AG04449 (cell line): ENCODE measurements at regions of chr11 and their contacts with region 1.

Region 1: GRCh38 chr11:64298966-64299846 is 952 bp upstream of the CATSPERZ start:
- DNase-seq: no peak
- H3K4me3 ChIP-seq: peak overlapping the region; percentile 32
- CTCF ChIP-seq: no peak

Region 2: GRCh38 chr11:64185816-64186498 is 113.2 kb before region 1 on chr11 and contains the start of gene STIP1:
- CTCF ChIA-PET with region 1: interaction called, 31 read pairs
- POLR2A ChIA-PET with region 1: interaction called, 8 read pairs
- DNase-seq: peak; percentile 100
- H3K4me3 ChIP-seq: peak within 1 kb of the TSS; percentile 71
- CTCF ChIP-seq: peak; percentile 69

Region 3: DNA sequence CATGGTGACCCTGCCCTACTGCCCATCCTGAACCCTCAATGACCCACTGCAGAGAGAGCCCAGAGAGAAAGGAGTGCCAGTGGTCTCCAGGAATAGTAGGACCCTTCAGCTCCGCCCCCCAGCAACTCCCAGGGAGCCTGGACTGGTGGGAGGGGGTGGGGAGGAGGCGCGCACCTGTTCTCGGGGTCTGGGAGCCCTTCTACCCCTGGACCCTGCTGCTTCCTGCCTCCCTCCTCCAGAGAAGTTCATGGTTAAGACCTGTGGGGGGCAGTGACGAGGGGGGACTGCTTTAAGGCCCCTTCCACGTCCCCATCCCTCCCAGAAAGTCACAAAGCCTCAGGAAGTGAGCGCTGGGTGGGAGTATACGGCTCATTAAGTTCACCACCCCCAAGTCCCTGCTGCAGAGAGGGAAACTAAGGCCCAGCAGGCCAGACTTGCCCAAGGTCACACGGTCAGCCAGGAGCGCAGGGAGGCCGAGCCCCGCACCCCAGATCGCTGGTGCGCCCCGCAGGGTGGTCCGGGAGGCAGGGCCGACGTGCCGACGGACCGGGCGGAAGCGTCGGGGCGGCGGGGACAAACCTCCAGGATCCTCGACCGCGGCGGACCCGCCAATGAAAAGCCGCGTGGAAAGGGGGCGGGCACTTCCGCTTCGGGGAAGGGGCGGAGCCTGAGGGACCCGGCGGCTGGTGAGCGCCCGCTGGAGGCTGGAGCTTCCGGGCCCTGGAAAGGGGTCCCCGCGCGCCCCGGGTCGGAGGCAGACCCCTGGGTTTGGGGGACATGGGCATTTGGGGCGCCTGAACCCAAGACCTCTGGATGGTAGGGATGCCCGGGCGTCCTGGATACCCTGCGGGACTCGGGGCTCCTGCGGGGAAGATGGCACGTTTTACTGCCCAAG is 73.3 kb before region 1 on chr11 and contains the starts of genes NUDT22 and TRPT1:
- CTCF ChIA-PET with region 1: interaction called, 10 read pairs
- POLR2A ChIA-PET with region 1: no interaction called
- DNase-seq: no peak
- H3K4me3 ChIP-seq: peak within 1 kb of the TSS; percentile 91
- CTCF ChIP-seq: peak; percentile 27

Region 4: DNA sequence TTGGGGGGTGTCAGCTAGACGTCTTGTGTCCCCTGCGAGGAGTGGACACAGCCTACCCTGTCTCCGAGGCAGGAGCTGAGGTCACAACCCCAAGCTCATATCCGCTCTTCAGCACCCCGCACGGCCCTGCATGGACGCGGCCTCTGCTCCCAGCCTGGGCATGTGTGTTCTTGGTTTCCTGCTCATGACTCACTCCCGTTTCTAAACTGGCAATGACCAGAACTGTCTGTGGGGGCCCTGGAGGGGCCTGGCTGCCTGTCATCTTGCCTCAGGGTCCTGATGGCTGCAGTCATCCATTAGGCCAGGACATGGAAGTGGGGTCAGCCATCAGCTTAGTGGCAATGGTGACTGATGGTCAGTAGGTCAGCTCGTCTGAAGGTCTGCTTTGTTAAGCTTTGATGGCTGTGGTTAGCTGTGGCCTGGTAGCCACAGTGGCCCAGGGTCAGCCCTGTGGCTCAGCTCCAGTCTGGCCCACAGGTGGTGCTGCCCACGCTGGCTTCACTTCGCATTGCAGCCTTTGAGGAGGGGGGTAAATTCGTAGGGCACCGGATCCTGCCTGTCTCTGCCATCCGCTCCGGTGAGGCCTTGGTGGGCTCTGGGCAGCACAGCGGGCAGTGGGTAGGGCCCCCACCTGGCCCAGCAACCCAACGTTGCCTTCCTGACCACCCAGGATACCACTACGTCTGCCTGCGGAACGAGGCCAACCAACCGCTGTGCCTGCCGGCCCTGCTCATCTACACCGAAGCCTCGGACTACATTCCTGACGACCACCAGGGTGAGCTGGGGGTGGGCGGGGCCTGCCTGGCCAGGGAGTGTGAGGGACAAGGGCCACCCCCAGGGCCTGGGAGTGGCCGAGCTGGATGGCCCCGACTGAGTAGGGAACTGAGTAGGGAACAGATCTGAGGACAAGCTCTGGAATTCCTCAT is 35.9 kb before region 1 on chr11:
- CTCF ChIA-PET with region 1: interaction called, 107 read pairs
- POLR2A ChIA-PET with region 1: no interaction called
- DNase-seq: no peak
- H3K4me3 ChIP-seq: no peak overlapping the region
- CTCF ChIP-seq: no peak